HEK293 (cell line): ENCODE measurements at regions of chr12 and their contacts with region 1.

Region 1: DNA sequence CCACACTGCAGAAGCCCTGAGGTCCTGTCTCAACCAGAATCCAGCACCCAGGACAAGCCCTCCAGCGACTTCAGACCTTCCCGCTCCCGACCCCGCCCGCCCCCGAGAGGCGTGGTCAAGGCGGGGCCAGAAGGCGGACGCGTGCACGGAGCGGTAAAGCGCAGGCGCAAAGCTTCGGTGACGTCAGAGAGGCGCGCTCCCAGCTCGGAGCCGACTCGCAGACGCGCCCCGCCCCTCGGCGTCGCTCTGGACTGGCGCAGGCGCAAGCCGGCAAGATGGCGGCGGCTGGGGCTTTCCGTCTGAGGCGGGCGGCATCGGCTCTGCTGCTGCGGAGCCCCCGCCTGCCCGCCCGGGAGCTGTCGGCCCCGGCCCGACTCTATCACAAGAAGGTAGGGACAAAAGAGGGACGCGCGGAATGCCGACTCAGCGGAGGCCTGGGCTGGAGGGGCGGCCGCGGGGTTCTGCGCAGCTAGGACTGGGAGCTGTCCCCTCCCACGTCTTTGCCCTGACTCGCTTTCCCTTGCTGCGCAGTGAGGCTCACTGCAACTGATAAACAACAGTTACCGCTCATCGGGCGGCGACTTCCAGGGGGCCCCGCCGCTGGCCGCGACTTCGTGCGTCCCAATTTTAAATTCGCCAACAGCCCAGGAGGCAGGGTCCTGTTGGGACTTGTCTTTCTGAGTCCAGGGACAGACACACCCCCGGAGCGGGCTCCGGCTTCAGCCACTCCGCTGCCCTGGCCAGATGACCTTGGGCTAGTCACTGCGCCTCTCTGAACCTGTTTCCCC is at the start of gene ISCU:
- H3K4me3 ChIP-seq: peak within 1 kb of the TSS; percentile 97
- H3K27ac ChIP-seq: peak within 1 kb of the TSS; percentile 77
- H3K4me1 ChIP-seq: 0 out of 2 replicates have a peak, but pooled peaks cover 2% of the 10 kb centered on the region
- CTCF ChIP-seq: no peak

Region 2: GRCh38 chr12:107822356-107822755 is 740.2 kb before region 1 on chr12:
- CTCF ChIA-PET with region 1: no interaction called
- POLR2A ChIA-PET with region 1: no interaction called
- H3K4me3 ChIP-seq: no peak overlapping the region
- H3K27ac ChIP-seq: no peak overlapping the region
- H3K4me1 ChIP-seq: no peaks in the 10 kb centered on the region
- CTCF ChIP-seq: no peak

Region 3: GRCh38 chr12:108576660-108577234 is 14.2 kb after region 1 on chr12:
- CTCF ChIA-PET with region 1: interaction called, 18 read pairs
- POLR2A ChIA-PET with region 1: no interaction called
- H3K4me3 ChIP-seq: no peak overlapping the region
- H3K27ac ChIP-seq: no peak overlapping the region
- H3K4me1 ChIP-seq: no peaks in the 10 kb centered on the region
- CTCF ChIP-seq: no peak